ENCODE measurements at regions of chr6 and their contacts with region 1.

Region 1: GRCh38 chr6:27687154-27688013 is 214.5 kb upstream of the ZNF184 start:
- DNase-seq: peak; percentile 90
- H3K4me3 Mint-ChIP-seq: peak overlapping the region; percentile 93
- H3K27ac Mint-ChIP-seq: peak overlapping the region; percentile 94
- H3K4me1 Mint-ChIP-seq: peaks cover 18% of the 10 kb centered on the region
- H3K27me3 Mint-ChIP-seq: peaks cover 26% of the 10 kb centered on the region

Region 2: GRCh38 chr6:27177485-27178406 is 509.6 kb before region 1 on chr6:
- CTCF ChIA-PET with region 1: interaction called, 6 read pairs
- intact Hi-C with region 1: loop called (anchors 2 kb)
- DNase-seq: peak; percentile 83
- H3K4me3 Mint-ChIP-seq: peak overlapping the region; percentile 92
- H3K27ac Mint-ChIP-seq: peak overlapping the region; percentile 87
- H3K4me1 Mint-ChIP-seq: peaks cover 4% of the 10 kb centered on the region
- H3K27me3 Mint-ChIP-seq: peaks cover 6% of the 10 kb centered on the region

Region 3: GRCh38 chr6:27312146-27312949 is 375.0 kb before region 1 on chr6 and contains the start of gene POM121L2:
- CTCF ChIA-PET with region 1: no interaction called
- intact Hi-C with region 1: loop called (anchors 5 kb)
- DNase-seq: peak; percentile 79
- H3K4me3 Mint-ChIP-seq: peak within 1 kb of the TSS; percentile 72
- H3K27ac Mint-ChIP-seq: no peak within 1 kb of the TSS
- H3K4me1 Mint-ChIP-seq: peaks cover 10% of the 10 kb centered on the region
- H3K27me3 Mint-ChIP-seq: peaks cover 62% of the 10 kb centered on the region
- total RNA-seq, gene POM121L2: not detected

Region 4: DNA sequence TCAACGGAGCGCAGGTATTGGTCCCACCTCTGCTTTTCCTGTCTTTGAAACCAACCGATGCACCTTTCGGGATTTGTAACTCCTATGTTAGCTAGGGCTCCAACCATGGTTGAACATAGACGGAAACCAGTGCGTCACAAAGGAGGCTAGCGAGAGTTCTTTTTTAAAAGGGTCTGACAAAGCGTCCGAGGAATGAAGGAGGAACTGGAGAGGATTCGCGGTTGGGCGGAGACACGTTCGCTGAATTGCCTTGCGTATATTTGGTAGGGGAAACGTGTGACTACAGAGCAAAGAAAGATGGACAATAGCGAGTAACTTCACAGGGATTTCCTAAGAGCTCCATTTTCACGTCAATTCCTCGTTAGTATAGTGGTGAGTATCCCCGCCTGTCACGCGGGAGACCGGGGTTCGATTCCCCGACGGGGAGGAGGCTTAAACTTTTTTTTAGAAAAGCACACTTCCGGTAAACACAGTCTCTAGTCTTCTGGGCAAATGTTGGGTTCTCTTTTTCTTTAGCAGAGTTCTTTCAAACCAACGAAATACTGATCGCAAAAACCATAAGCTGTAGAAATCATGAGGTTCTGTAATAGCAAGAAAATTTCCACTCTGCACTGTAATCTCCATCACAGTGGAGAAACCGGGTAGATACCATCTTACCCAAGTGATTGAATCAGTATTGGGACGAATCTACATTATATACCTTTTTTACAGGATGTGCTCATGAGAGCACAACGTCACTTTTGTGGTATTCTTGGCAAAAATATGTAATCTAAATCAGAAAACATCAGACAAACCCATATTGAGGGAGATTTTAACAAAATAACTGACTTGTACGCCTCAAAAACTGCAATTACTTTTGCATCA is 207.8 kb before region 1 on chr6:
- CTCF ChIA-PET with region 1: no interaction called
- intact Hi-C with region 1: loop called (anchors 1 kb)
- DNase-seq: peak; percentile 90
- H3K4me3 Mint-ChIP-seq: no peak overlapping the region
- H3K27ac Mint-ChIP-seq: no peak overlapping the region
- H3K4me1 Mint-ChIP-seq: peaks cover 6% of the 10 kb centered on the region
- H3K27me3 Mint-ChIP-seq: no peaks in the 10 kb centered on the region

Region 5: GRCh38 chr6:27518881-27519795 is 168.2 kb before region 1 on chr6:
- CTCF ChIA-PET with region 1: interaction called, 7 read pairs
- intact Hi-C with region 1: loop called (anchors 2 kb)
- DNase-seq: peak; percentile 82
- H3K4me3 Mint-ChIP-seq: peak overlapping the region; percentile 76
- H3K27ac Mint-ChIP-seq: peak overlapping the region; percentile 81
- H3K4me1 Mint-ChIP-seq: peaks cover 18% of the 10 kb centered on the region
- H3K27me3 Mint-ChIP-seq: peaks cover 10% of the 10 kb centered on the region

Region 6: DNA sequence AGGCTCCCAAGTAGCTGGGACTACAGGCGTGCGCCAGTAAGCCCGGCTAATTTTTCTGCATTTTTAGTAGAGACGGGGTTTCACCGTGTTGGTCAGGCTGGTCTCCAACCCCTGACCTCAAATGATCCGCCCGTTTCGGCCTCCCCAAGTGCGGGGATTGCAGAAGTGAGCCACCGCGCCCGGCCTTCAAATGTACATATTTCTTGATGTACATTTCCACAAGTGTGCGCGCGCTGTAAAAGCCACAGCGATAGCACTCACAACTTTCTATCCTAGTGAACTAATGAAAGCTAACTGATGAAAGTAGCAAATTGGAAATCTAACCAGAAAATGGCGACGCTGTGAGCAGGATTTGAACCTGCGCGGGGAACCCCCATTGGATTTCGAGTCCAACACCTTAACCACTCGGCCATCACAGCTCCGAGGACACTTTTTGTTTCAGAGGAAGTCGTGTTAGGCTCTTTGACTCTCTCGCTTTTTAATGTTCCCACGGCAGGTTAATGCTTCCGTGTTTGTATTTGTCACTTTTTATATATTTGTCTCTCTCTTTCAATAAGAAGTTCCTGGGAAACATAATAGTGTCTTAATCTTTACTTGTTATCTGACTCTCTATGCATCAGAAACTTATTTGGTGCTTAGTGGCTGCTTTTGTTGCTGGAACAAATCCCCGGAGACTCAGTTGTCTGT is 15.1 kb before region 1 on chr6:
- CTCF ChIA-PET with region 1: interaction called, 6 read pairs
- intact Hi-C with region 1: loop called (anchors 2 kb)
- DNase-seq: peak; percentile 72
- H3K4me3 Mint-ChIP-seq: peak overlapping the region; percentile 44
- H3K27ac Mint-ChIP-seq: peak overlapping the region; percentile 66
- H3K4me1 Mint-ChIP-seq: peaks cover 34% of the 10 kb centered on the region
- H3K27me3 Mint-ChIP-seq: peaks cover 74% of the 10 kb centered on the region

Region 7: GRCh38 chr6:27902335-27903314 is 215.2 kb after region 1 on chr6:
- CTCF ChIA-PET with region 1: no interaction called
- intact Hi-C with region 1: loop called (anchors 2 kb)
- DNase-seq: peak; percentile 95
- H3K4me3 Mint-ChIP-seq: peak overlapping the region; percentile 81
- H3K27ac Mint-ChIP-seq: peak overlapping the region; percentile 94
- H3K4me1 Mint-ChIP-seq: peaks cover 6% of the 10 kb centered on the region
- H3K27me3 Mint-ChIP-seq: peaks cover 5% of the 10 kb centered on the region